Sigmoid colon (tissue), 7 donors: ENCODE measurements at regions of chr5 and their contacts with region 1.

Region 1: GRCh38 chr5:129767906-129768380 is 20.0 kb downstream of the MINAR2 start:
- DNase-seq: peak; percentile 72
- H3K4me3 ChIP-seq: no peak overlapping the region
- H3K27ac ChIP-seq: no peak overlapping the region
- H3K4me1 ChIP-seq: no peaks in the 10 kb centered on the region
- H3K27me3 ChIP-seq: no peaks in the 10 kb centered on the region
- CTCF ChIP-seq: peak; percentile 82 to 96 (median 89)
- EP300 ChIP-seq: no peak
- POLR2A ChIP-seq: no peak

Region 2: DNA sequence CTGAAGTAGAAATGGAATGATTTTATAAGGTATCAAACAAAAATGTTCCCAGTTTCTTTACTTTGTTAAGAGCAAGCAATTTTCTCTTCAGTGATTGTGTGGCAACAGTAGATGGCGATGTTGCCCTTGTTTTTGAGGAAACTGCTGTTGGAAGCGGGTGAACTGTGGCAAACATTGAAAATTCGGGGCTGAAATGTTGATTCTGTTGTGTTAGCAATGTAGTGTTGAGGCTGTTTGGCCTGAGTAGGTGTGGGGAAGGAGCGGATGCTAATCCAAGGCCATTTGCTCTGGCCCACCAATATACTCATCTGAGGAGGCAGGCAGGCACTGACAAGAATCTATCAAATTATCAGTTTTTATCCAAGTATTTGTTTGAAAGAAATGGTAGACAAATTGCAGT is 1554.6 kb before region 1 on chr5:
- intact Hi-C with region 1: loop called (anchors 5 kb)
- DNase-seq: no peak
- H3K4me3 ChIP-seq: no peak overlapping the region
- H3K27ac ChIP-seq: no peak overlapping the region
- H3K4me1 ChIP-seq: no peaks in the 10 kb centered on the region
- H3K27me3 ChIP-seq: no peaks in the 10 kb centered on the region
- CTCF ChIP-seq: peak; percentile 44 to 67 (median 52)
- EP300 ChIP-seq: no peak
- POLR2A ChIP-seq: no peak

Region 3: DNA sequence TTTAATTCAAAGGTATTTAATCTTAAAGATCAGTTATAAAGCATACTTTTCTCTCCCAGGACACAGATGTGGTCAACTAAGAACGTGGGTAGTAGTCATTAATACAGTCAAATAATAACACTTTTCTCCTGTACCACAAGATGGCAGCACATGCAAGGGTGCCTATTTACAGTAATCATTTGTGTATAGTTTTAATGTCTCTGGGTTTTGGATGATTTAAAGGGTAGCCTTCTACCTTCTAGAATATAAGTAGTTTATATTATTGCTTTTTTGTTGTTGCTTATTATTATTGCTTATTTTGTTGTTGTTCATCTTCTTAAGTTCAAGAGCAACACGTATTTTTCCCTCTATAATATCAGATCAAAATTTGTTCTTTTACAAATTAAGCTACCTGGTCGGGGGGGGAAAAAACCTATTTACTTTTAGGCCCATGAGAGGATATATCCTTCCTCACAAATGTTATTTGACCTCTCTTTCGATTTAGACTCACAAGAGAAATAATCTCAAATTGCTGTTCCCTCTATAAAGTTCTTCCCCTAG is 862.3 kb before region 1 on chr5:
- intact Hi-C with region 1: loop called (anchors 5 kb)
- DNase-seq: no peak
- H3K4me3 ChIP-seq: no peak overlapping the region
- H3K27ac ChIP-seq: no peak overlapping the region
- H3K4me1 ChIP-seq: no peaks in the 10 kb centered on the region
- H3K27me3 ChIP-seq: no peaks in the 10 kb centered on the region
- CTCF ChIP-seq: peak; percentile 24 to 76 (median 60)
- EP300 ChIP-seq: no peak
- POLR2A ChIP-seq: no peak

Region 4: GRCh38 chr5:129113871-129114270 is 654.1 kb before region 1 on chr5:
- intact Hi-C with region 1: loop called (anchors 5 kb)
- DNase-seq: no peak
- H3K4me3 ChIP-seq: no peak overlapping the region
- H3K27ac ChIP-seq: no peak overlapping the region
- H3K4me1 ChIP-seq: no peaks in the 10 kb centered on the region
- H3K27me3 ChIP-seq: no peaks in the 10 kb centered on the region
- CTCF ChIP-seq: peak in 1 of 4 experiments; percentile 24
- EP300 ChIP-seq: no peak
- POLR2A ChIP-seq: no peak